Calu3 (cell line): ENCODE measurements at regions of chr15 and their contacts with region 1.

Region 1: DNA sequence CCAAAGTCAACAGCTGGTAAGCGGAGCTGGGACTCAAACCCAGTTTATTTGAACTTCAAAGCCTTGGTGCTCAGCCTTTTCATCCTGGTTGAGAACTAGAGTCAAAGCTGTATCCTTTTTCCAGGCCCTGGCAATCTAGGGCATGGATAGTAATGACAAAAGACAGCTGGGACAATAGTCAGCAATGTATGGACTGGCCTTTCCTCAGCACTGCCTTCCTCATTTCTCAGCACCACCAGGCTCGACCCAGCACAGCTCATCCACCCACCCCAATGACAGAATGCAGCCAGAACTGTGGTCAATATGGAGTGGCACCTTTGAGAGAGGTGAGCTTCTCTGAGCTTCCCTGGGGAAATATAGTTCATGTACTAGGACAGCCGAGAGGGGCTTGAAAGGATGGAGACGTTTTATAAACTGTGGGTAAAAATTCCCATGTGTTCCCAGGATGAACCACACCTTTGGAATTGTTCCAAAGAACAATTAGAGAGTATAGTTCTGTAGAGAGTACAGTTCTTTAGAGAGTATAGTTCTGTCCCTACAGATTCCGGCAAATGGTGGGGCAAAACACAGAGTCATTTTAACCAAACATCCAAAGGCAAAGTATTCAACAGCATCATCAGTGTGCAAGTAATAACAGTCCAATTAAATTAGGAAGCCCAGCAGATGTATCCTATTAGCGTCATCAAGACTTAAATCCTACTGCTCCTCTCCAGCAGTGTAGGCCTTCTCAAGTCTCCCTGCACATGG is 30.2 kb upstream of the IREB2 start:
- DNase-seq: no peak
- H3K4me3 Mint-ChIP-seq: no peak overlapping the region
- H3K27ac Mint-ChIP-seq: no peak overlapping the region
- H3K4me1 Mint-ChIP-seq: no peaks in the 10 kb centered on the region
- H3K27me3 Mint-ChIP-seq: peaks cover 8% of the 10 kb centered on the region
- CTCF ChIP-seq: no peak

Region 2: GRCh38 chr15:78387246-78388077 is 20.3 kb before region 1 on chr15:
- CTCF ChIA-PET with region 1: interaction called, 10 read pairs
- intact Hi-C with region 1: no loop called
- DNase-seq: no peak
- H3K4me3 Mint-ChIP-seq: no peak overlapping the region
- H3K27ac Mint-ChIP-seq: no peak overlapping the region
- H3K4me1 Mint-ChIP-seq: no peaks in the 10 kb centered on the region
- H3K27me3 Mint-ChIP-seq: peaks cover 77% of the 10 kb centered on the region
- CTCF ChIP-seq: no peak